Activated CD8-positive, alpha-beta T cell treated with anti-CD3 and anti-CD28 coated beads, Interleukin-2, amount 10 ng/mL, durations not matched to agents 7 days and 5 days (primary cell): ENCODE measurements at regions of chr3 and their contacts with region 1.

Region 1: DNA sequence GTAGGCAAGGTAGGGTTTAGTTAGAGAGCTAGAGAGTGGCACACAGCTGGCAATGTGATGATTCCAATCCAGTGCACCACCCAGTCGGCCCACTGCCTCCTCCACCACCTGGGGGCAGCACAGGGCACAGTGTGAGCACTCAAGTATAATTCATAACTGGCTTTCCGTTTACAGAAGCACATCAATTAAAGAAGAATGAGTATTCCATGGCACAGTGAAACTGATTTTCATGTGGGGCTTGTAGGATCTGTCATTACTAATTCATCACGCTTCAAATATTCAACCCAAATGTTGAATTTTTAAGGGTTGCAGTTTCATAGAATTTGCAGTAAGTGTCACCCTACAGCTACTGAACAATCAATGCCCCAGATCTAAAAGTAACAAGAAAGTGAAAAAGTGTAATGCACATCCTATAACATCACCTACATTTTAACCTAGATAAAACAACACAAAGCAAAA is 149.9 kb downstream of the IGSF11 start:
- DNase-seq: peak; percentile 82
- ATAC-seq: peak; percentile 89
- H3K4me3 Mint-ChIP-seq: no peak overlapping the region
- H3K27ac Mint-ChIP-seq: no peak overlapping the region
- H3K4me1 Mint-ChIP-seq: peaks cover 10% of the 10 kb centered on the region
- H3K27me3 Mint-ChIP-seq: peaks cover 17% of the 10 kb centered on the region

Region 2: GRCh38 chr3:118868051-118868450 is 16.7 kb before region 1 on chr3:
- CTCF ChIA-PET with region 1: interaction called, 44 read pairs
- POLR2A ChIA-PET with region 1: no interaction called
- DNase-seq: no peak
- ATAC-seq: no peak
- H3K4me3 Mint-ChIP-seq: no peak overlapping the region
- H3K27ac Mint-ChIP-seq: no peak overlapping the region
- H3K4me1 Mint-ChIP-seq: no peaks in the 10 kb centered on the region
- H3K27me3 Mint-ChIP-seq: peaks cover 10% of the 10 kb centered on the region

Region 3: GRCh38 chr3:118960876-118961450 is 76.2 kb after region 1 on chr3:
- CTCF ChIA-PET with region 1: interaction called, 36 read pairs
- POLR2A ChIA-PET with region 1: no interaction called
- DNase-seq: no peak
- ATAC-seq: no peak
- H3K4me3 Mint-ChIP-seq: no peak overlapping the region
- H3K27ac Mint-ChIP-seq: no peak overlapping the region
- H3K4me1 Mint-ChIP-seq: peaks cover 20% of the 10 kb centered on the region
- H3K27me3 Mint-ChIP-seq: peaks cover 2% of the 10 kb centered on the region

Region 4: GRCh38 chr3:119034256-119035013 is 149.7 kb after region 1 on chr3 and contains the start of gene IGSF11:
- CTCF ChIA-PET with region 1: interaction called, 373 read pairs
- POLR2A ChIA-PET with region 1: interaction called, 7 read pairs
- DNase-seq: peak; percentile 73
- ATAC-seq: peak; percentile 97
- H3K4me3 Mint-ChIP-seq: peak within 1 kb of the TSS; percentile 89
- H3K27ac Mint-ChIP-seq: peak within 1 kb of the TSS; percentile 43
- H3K4me1 Mint-ChIP-seq: peaks cover 13% of the 10 kb centered on the region
- H3K27me3 Mint-ChIP-seq: peaks cover 47% of the 10 kb centered on the region
- total RNA-seq, gene IGSF11: 2.0 to 2.5 TPM

Region 5: GRCh38 chr3:119084371-119085072 is 199.7 kb after region 1 on chr3:
- CTCF ChIA-PET with region 1: interaction called, 22 read pairs
- POLR2A ChIA-PET with region 1: no interaction called
- DNase-seq: no peak
- ATAC-seq: no peak
- H3K4me3 Mint-ChIP-seq: no peak overlapping the region
- H3K27ac Mint-ChIP-seq: no peak overlapping the region
- H3K4me1 Mint-ChIP-seq: no peaks in the 10 kb centered on the region
- H3K27me3 Mint-ChIP-seq: peaks cover 23% of the 10 kb centered on the region

Region 6: GRCh38 chr3:119161240-119161639 is 276.5 kb after region 1 on chr3:
- CTCF ChIA-PET with region 1: no interaction called
- POLR2A ChIA-PET with region 1: no interaction called
- DNase-seq: no peak
- ATAC-seq: no peak
- H3K4me3 Mint-ChIP-seq: no peak overlapping the region
- H3K27ac Mint-ChIP-seq: no peak overlapping the region
- H3K4me1 Mint-ChIP-seq: no peaks in the 10 kb centered on the region
- H3K27me3 Mint-ChIP-seq: peaks cover 18% of the 10 kb centered on the region

Region 7: DNA sequence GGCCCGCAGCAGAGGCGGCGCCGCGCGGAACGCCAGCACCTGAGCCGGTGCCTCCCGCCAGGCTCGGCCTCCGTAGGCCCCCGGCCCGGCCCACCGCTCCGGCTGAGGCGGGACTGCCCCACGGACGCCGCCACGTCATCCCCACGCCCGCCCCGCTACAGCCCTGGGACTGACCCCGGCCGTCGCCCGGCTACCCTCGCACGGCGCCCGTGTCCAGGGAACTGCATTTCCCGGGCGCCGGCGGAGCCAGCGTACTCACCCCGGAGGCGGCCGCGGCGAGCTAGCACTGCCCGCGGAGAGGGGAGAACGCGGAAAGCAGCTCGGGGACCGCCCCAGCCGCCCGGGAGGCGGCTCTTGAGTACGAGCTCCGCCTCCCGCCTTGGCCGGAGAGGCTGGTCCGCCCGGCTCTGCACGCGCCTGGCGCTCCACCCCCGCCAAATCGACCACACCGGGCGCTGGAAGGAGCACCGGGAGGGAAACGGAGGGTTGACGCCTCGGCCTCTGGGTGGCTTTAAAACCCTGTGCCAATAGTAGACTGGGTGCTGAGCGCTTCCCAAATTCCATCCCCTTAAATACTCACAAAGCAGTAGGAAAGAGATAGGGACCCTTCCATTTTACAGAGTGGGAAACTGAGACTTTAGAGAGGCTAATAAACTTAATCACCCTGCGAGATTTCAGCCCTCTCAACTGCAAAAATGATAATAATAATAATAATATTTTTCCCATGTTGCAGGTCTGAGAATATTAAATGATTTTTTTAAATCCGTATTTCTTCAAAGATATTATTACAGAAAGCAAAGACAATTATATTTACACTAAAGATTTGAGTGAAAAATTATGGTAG is 356.0 kb after region 1 on chr3 and contains the start of gene B4GALT4:
- CTCF ChIA-PET with region 1: interaction called, 71 read pairs
- POLR2A ChIA-PET with region 1: no interaction called
- DNase-seq: peak; percentile 85
- ATAC-seq: peak; percentile 87
- H3K4me3 Mint-ChIP-seq: peak within 1 kb of the TSS; percentile 79
- H3K27ac Mint-ChIP-seq: peak within 1 kb of the TSS; percentile 80
- H3K4me1 Mint-ChIP-seq: peaks cover 45% of the 10 kb centered on the region
- H3K27me3 Mint-ChIP-seq: no peaks in the 10 kb centered on the region
- total RNA-seq, gene B4GALT4: 16.3 to 16.4 TPM

Region 8: GRCh38 chr3:119676771-119677640 is 792.2 kb after region 1 on chr3 and contains the start of gene COX17:
- CTCF ChIA-PET with region 1: interaction called, 41 read pairs
- POLR2A ChIA-PET with region 1: no interaction called
- DNase-seq: peak; percentile 98
- ATAC-seq: peak; percentile 94
- H3K4me3 Mint-ChIP-seq: peak within 1 kb of the TSS; percentile 96
- H3K27ac Mint-ChIP-seq: peak within 1 kb of the TSS; percentile 95
- H3K4me1 Mint-ChIP-seq: peaks cover 35% of the 10 kb centered on the region
- H3K27me3 Mint-ChIP-seq: no peaks in the 10 kb centered on the region
- total RNA-seq, gene COX17: 62.0 to 71.5 TPM